Natural killer cell (primary cell): ENCODE measurements at regions of chr1 and their contacts with region 1.

Region 1: GRCh38 chr1:88683541-88684481 is at the start of gene PKN2:
- DNase-seq: peak; percentile 95 to 99
- ATAC-seq: peak; percentile 91 to 97 (median 93)
- H3K4me3 ChIP-seq: peak within 1 kb of the TSS; percentile 87
- H3K4me3 Mint-ChIP-seq: peak within 1 kb of the TSS; percentile 98
- H3K27ac ChIP-seq: peak within 1 kb of the TSS; percentile 93
- H3K27ac Mint-ChIP-seq: peak within 1 kb of the TSS; percentile 94 to 96
- H3K4me1 ChIP-seq: peaks cover 12% of the 10 kb centered on the region
- H3K4me1 Mint-ChIP-seq: peaks cover 21 to 35% of the 10 kb centered on the region in 2 donors
- H3K27me3 ChIP-seq: no peaks in the 10 kb centered on the region
- H3K27me3 Mint-ChIP-seq: no peaks in the 10 kb centered on the region
- CTCF ChIP-seq: no peak
- total RNA-seq, gene PKN2: 40.8 to 50.1 (median 47.2) TPM

Region 2: GRCh38 chr1:86913896-86914634 is 1769.7 kb before region 1 on chr1 and contains the start of gene SELENOF:
- intact Hi-C with region 1: loop called (anchors 5 kb)
- DNase-seq: peak; percentile 98 to 100
- ATAC-seq: peak; percentile 87 to 96 (median 90)
- H3K4me3 ChIP-seq: peak within 1 kb of the TSS; percentile 84
- H3K4me3 Mint-ChIP-seq: no peak within 1 kb of the TSS
- H3K27ac ChIP-seq: peak within 1 kb of the TSS; percentile 94
- H3K27ac Mint-ChIP-seq: no peak within 1 kb of the TSS
- H3K4me1 ChIP-seq: peaks cover 9% of the 10 kb centered on the region
- H3K4me1 Mint-ChIP-seq: peaks cover 7 to 39% of the 10 kb centered on the region in 2 donors
- H3K27me3 ChIP-seq: no peaks in the 10 kb centered on the region
- H3K27me3 Mint-ChIP-seq: no peaks in the 10 kb centered on the region
- CTCF ChIP-seq: no peak
- total RNA-seq, gene SELENOF: 124 to 163 (median 137) TPM

Region 3: DNA sequence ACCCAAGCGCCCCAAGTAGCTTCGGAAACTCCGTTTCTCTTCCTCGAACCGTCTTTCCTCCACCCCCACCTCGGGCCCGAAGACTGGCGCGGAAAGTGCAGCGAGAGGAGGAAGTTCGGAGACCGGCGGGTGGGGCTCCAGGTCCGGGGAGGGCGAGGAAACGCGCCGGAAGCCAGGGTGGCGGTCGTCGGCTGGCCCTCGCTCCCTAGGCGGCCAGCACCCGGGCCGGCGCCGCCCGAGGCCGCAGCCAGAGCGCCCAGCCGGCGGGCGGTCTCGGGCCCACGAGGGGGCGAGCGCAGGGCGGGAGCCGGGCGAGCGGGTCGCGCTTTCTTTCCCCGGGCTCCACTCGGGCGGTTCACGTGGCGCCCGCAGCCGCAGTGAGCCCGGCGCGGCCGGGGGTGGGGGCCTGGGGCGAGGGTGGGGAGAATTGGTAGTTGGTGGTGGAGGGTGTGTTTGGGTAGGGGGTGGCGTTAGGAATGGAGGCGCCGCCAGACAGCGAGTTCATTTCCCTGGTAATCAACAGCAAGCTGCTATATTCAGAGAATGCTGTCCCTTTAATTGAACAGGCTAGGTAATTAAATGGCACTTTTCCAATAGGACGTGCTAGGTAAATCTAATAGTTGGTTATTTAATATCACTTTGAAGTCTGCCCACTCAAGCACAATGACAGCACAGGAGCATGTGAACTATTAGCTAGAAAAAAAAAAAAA is 1348.5 kb before region 1 on chr1:
- intact Hi-C with region 1: loop called (anchors 5 kb)
- DNase-seq: peak; percentile 69 to 72
- ATAC-seq: peak; percentile 57 to 78 (median 69)
- H3K4me3 ChIP-seq: peak overlapping the region; percentile 56
- H3K4me3 Mint-ChIP-seq: peak overlapping the region; percentile 95
- H3K27ac ChIP-seq: peak overlapping the region; percentile 71
- H3K27ac Mint-ChIP-seq: peak overlapping the region; percentile 88 to 98
- H3K4me1 ChIP-seq: peaks cover 25% of the 10 kb centered on the region
- H3K4me1 Mint-ChIP-seq: peaks cover 77% of the 10 kb centered on the region in 2 donors
- H3K27me3 ChIP-seq: no peaks in the 10 kb centered on the region
- H3K27me3 Mint-ChIP-seq: no peaks in the 10 kb centered on the region
- CTCF ChIP-seq: no peak

Region 4: GRCh38 chr1:88655685-88656299 is 28.0 kb before region 1 on chr1:
- intact Hi-C with region 1: loop called (anchors 1 kb)
- DNase-seq: peak in 1 of 2 donors; percentile 68
- ATAC-seq: no peak
- H3K4me3 ChIP-seq: no peak overlapping the region
- H3K4me3 Mint-ChIP-seq: no peak overlapping the region
- H3K27ac ChIP-seq: no peak overlapping the region
- H3K27ac Mint-ChIP-seq: no peak overlapping the region
- H3K4me1 ChIP-seq: no peaks in the 10 kb centered on the region
- H3K4me1 Mint-ChIP-seq: no peaks in the 10 kb centered on the region
- H3K27me3 ChIP-seq: no peaks in the 10 kb centered on the region
- H3K27me3 Mint-ChIP-seq: peaks cover 2 to 4% of the 10 kb centered on the region in 2 donors
- CTCF ChIP-seq: peak; percentile 79

Region 5: DNA sequence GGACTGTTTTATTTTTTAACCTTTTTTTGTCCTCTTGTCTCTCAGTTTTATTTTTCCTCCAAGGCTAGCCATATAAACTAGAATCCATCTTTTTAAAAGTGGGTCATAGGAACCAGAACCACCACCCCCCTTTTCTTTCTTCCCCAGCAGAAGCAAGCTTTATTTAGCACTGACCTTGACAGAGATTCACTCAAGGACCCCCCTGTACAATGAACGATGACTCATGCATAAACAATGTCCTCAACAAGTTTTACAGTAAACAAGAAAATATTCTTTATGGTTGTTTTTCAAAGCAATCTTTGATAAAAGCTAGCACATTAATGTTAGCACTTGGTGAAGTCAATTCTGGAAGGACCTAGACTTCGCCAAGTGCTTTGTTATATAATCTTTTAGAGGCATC is 14.3 kb after region 1 on chr1:
- intact Hi-C with region 1: no loop called
- DNase-seq: no peak
- ATAC-seq: no peak
- H3K4me3 ChIP-seq: no peak overlapping the region
- H3K4me3 Mint-ChIP-seq: no peak overlapping the region
- H3K27ac ChIP-seq: no peak overlapping the region
- H3K27ac Mint-ChIP-seq: peak overlapping the region in 1 of 2 donors; percentile 54
- H3K4me1 ChIP-seq: no peaks in the 10 kb centered on the region
- H3K4me1 Mint-ChIP-seq: peaks cover 44 to 45% of the 10 kb centered on the region in 2 donors
- H3K27me3 ChIP-seq: no peaks in the 10 kb centered on the region
- H3K27me3 Mint-ChIP-seq: no peaks in the 10 kb centered on the region
- CTCF ChIP-seq: no peak

Region 6: DNA sequence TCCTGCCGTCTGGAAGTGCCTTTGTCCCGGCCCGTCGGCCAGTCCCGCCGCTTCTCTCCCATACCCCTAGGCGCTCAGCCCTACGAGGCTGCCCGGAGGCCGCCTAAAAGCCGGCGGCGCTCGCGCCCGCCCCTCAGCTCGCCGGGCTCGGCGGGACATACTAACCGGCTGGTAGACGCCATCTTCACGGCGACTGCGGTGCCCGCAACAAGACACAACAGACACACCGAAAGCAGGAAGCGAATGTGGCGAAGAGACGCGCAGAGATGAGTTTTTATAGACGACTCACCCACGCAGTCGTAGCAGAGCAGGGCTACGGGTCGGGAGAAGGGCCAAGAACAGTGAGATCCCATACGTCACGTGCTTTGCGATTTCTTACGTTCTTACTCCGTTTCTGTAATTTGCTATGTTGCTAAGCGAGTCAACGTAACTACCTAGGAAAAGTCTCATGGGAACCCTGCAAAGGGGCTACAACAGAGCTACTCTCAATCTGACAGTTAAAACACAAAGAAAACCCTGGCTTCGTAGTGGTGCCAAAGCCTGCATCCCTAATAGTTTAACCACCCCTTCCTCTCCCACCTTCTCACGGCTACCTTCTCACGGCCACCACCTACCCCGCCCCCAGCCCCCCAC is 207.6 kb after region 1 on chr1 and contains the start of gene GTF2B:
- intact Hi-C with region 1: loop called (anchors 2 kb)
- DNase-seq: peak; percentile 93 to 99
- ATAC-seq: peak; percentile 92 to 97 (median 94)
- H3K4me3 ChIP-seq: peak within 1 kb of the TSS; percentile 97
- H3K4me3 Mint-ChIP-seq: peak within 1 kb of the TSS; percentile 99
- H3K27ac ChIP-seq: peak within 1 kb of the TSS; percentile 97
- H3K27ac Mint-ChIP-seq: peak within 1 kb of the TSS; percentile 98 to 99
- H3K4me1 ChIP-seq: peaks cover 5% of the 10 kb centered on the region
- H3K4me1 Mint-ChIP-seq: peaks cover 45 to 51% of the 10 kb centered on the region in 2 donors
- H3K27me3 ChIP-seq: no peaks in the 10 kb centered on the region
- H3K27me3 Mint-ChIP-seq: no peaks in the 10 kb centered on the region
- CTCF ChIP-seq: no peak
- total RNA-seq, gene GTF2B: 45.6 to 71.3 (median 55.6) TPM